CD4-positive, alpha-beta memory T cell (primary cell): ENCODE measurements at regions of chr3 and their contacts with region 1.

Region 1: DNA sequence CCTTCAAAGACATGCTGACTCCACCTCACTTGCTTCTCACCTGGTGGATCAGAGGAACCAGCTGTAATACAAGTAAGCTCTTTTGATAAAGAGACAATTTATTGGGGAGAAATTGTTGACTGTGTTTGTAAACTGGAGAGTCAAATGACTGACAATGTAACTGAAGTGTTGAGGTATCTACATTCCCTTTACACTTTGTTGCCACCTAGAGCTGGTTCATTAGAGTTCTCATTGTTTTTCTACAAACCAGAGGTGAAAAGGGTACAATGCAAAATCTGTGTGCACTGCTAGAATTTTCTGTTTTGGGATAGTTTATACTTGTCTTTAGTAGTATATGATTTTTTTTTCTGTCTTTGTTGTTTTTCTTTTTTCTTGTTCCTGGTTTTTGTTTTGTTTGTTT is 8.7 kb upstream of the LRRC58 start:
- DNase-seq: no peak
- H3K4me3 ChIP-seq: no peak overlapping the region
- H3K4me3 Mint-ChIP-seq: no peak overlapping the region
- H3K27ac ChIP-seq: no peak overlapping the region
- H3K27ac Mint-ChIP-seq: peak overlapping the region in 1 of 7 donors; percentile 30
- H3K4me1 ChIP-seq: no peaks in the 10 kb centered on the region
- H3K4me1 Mint-ChIP-seq: no peaks in the 10 kb centered on the region
- H3K27me3 ChIP-seq: no peaks in the 10 kb centered on the region
- H3K27me3 Mint-ChIP-seq: peaks cover 2 to 13% of the 10 kb centered on the region in 2 donors

Region 2: DNA sequence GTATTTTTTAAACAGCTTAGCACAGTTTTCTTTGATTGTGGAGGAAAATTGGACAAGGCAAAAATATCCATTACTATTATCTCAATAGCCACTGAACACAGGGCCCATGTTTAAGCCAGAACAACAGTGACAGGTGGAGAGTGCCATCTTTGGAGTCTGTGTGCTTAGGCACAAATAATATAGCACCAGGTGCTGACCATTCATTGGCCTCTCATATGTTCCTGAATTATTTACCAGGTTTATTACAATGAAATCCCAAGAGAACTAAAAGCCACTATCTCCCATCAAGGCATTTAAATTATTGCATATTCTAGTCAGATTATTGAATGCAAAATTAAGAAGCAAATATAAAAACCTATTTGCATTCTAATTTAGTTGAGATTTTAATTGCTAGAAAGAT is 112.4 kb before region 1 on chr3:
- CTCF ChIA-PET with region 1: interaction called, 22 read pairs
- POLR2A ChIA-PET with region 1: no interaction called
- intact Hi-C with region 1: loop called (anchors 1 kb)
- DNase-seq: no peak
- H3K4me3 ChIP-seq: no peak overlapping the region
- H3K4me3 Mint-ChIP-seq: no peak overlapping the region
- H3K27ac ChIP-seq: no peak overlapping the region
- H3K27ac Mint-ChIP-seq: no peak overlapping the region
- H3K4me1 ChIP-seq: no peaks in the 10 kb centered on the region
- H3K4me1 Mint-ChIP-seq: no peaks in the 10 kb centered on the region
- H3K27me3 ChIP-seq: peaks cover 4% of the 10 kb centered on the region
- H3K27me3 Mint-ChIP-seq: peaks cover 11 to 17% of the 10 kb centered on the region in 2 donors

Region 3: DNA sequence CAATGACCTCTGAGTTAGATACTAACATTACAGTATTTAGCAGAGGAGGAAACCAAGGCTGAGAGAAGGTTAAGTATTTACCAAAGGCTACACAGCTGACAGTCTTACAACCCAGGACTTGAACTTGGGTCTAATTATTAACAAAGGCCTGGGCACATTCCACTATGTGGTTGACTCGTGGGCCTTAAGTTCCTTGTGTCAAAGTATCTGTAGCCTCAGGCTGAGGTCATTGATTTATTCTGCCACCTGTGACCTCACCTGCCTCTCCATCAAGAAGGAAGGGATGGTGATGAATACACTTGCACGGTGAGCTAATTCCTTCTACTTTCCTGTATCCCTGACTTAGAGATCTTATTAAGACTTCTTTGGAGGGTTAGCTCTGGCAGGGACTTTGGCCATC is 11.2 kb after region 1 on chr3:
- CTCF ChIA-PET with region 1: no interaction called
- POLR2A ChIA-PET with region 1: no interaction called
- intact Hi-C with region 1: no loop called
- DNase-seq: no peak
- H3K4me3 ChIP-seq: no peak overlapping the region
- H3K4me3 Mint-ChIP-seq: no peak overlapping the region
- H3K27ac ChIP-seq: no peak overlapping the region
- H3K27ac Mint-ChIP-seq: no peak overlapping the region
- H3K4me1 ChIP-seq: no peaks in the 10 kb centered on the region
- H3K4me1 Mint-ChIP-seq: no peaks in the 10 kb centered on the region
- H3K27me3 ChIP-seq: no peaks in the 10 kb centered on the region
- H3K27me3 Mint-ChIP-seq: peaks cover 10 to 16% of the 10 kb centered on the region in 2 donors